PC-3 (cell line): ENCODE measurements at regions of chr15 and their contacts with region 1.

Region 1: GRCh38 chr15:88476635-88477060 is 9.1 kb downstream of the MRPS11 start:
- DNase-seq: peak; percentile 60
- ATAC-seq: peak; percentile 46; the same call in 1 of the 2 replicates
- H3K4me3 ChIP-seq: no peak overlapping the region
- H3K27ac ChIP-seq: no peak overlapping the region
- H3K4me1 ChIP-seq: no peaks in the 10 kb centered on the region
- H3K27me3 ChIP-seq: no peaks in the 10 kb centered on the region
- CTCF ChIP-seq: peak; percentile 67

Region 2: DNA sequence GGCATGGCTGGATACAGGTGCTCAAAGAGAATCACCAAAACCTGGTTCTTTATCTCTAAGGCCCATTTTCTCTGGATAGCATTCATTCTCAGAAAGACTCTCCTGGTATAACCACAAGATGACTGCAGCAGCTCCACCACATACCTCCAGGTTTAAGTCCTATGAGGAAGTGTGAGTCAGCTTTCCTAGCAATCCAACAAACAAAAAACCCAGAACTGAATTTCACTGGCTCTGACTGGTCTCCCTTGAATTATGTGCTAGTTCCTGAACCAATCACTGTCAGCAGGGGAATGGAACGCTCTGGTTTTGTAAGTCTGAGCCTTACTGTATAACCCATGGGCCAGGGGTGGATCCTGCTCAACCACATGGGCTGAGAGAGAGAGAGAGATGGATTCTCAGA is 36.6 kb before region 1 on chr15:
- CTCF ChIA-PET with region 1: no interaction called
- POLR2A ChIA-PET with region 1: no interaction called
- intact Hi-C with region 1: no loop called
- DNase-seq: peak; percentile 58
- ATAC-seq: 0 out of 2 replicates have a peak, but pooled peaks have one; percentile 24
- H3K4me3 ChIP-seq: no peak overlapping the region
- H3K27ac ChIP-seq: no peak overlapping the region
- H3K4me1 ChIP-seq: no peaks in the 10 kb centered on the region
- H3K27me3 ChIP-seq: no peaks in the 10 kb centered on the region
- CTCF ChIP-seq: no peak

Region 3: GRCh38 chr15:88529021-88529630 is 52.5 kb after region 1 on chr15:
- CTCF ChIA-PET with region 1: no interaction called
- POLR2A ChIA-PET with region 1: no interaction called
- intact Hi-C with region 1: no loop called
- DNase-seq: no peak
- ATAC-seq: no peak
- H3K4me3 ChIP-seq: no peak overlapping the region
- H3K27ac ChIP-seq: no peak overlapping the region
- H3K4me1 ChIP-seq: no peaks in the 10 kb centered on the region
- H3K27me3 ChIP-seq: no peaks in the 10 kb centered on the region
- CTCF ChIP-seq: no peak

Region 4: GRCh38 chr15:88610701-88611231 is 134.1 kb after region 1 on chr15:
- CTCF ChIA-PET with region 1: no interaction called
- POLR2A ChIA-PET with region 1: no interaction called
- intact Hi-C with region 1: loop called (anchors 1 kb)
- DNase-seq: no peak
- ATAC-seq: no peak
- H3K4me3 ChIP-seq: no peak overlapping the region
- H3K27ac ChIP-seq: no peak overlapping the region
- H3K4me1 ChIP-seq: no peaks in the 10 kb centered on the region
- H3K27me3 ChIP-seq: peaks cover 15% of the 10 kb centered on the region
- CTCF ChIP-seq: no peak

Region 5: GRCh38 chr15:88913017-88913849 is 436.6 kb after region 1 on chr15 and contains the start of gene MFGE8:
- CTCF ChIA-PET with region 1: interaction called, 12 read pairs
- POLR2A ChIA-PET with region 1: no interaction called
- intact Hi-C with region 1: no loop called
- DNase-seq: peak; percentile 52
- ATAC-seq: peak; percentile 84
- H3K4me3 ChIP-seq: peak within 1 kb of the TSS; percentile 84
- H3K27ac ChIP-seq: no peak within 1 kb of the TSS
- H3K4me1 ChIP-seq: peaks cover 26% of the 10 kb centered on the region
- H3K27me3 ChIP-seq: no peaks in the 10 kb centered on the region
- CTCF ChIP-seq: no peak
- total RNA-seq, gene MFGE8: 32.0 and 34.2 TPM in 2 replicates